Dendritic cell treated with granulocyte-macrophage colony-stimulating factor and Interleukin-4, amounts not matched to agents 40 ng/mL and 50 ng/mL, for 4 days (primary cell): ENCODE measurements at regions of chr20 and their contacts with region 1.

Region 1: GRCh38 chr20:5080384-5080877 is 39.3 kb downstream of the PCNA start:
- H3K4me3 Mint-ChIP-seq: peak overlapping the region; percentile 44
- H3K27ac Mint-ChIP-seq: peak overlapping the region; percentile 94
- H3K4me1 Mint-ChIP-seq: peaks cover 66% of the 10 kb centered on the region
- H3K27me3 Mint-ChIP-seq: no peaks in the 10 kb centered on the region

Region 2: GRCh38 chr20:4813863-4814695 is 266.4 kb before region 1 on chr20:
- intact Hi-C with region 1: loop called (anchors 10 kb)
- H3K4me3 Mint-ChIP-seq: peak overlapping the region; percentile 90
- H3K27ac Mint-ChIP-seq: peak overlapping the region; percentile 100
- H3K4me1 Mint-ChIP-seq: peaks cover 98% of the 10 kb centered on the region
- H3K27me3 Mint-ChIP-seq: no peaks in the 10 kb centered on the region

Region 3: GRCh38 chr20:5024982-5025381 is 55.4 kb before region 1 on chr20:
- intact Hi-C with region 1: no loop called
- H3K4me3 Mint-ChIP-seq: no peak overlapping the region
- H3K27ac Mint-ChIP-seq: no peak overlapping the region
- H3K4me1 Mint-ChIP-seq: peaks cover 24% of the 10 kb centered on the region
- H3K27me3 Mint-ChIP-seq: peaks cover under 1% of the 10 kb centered on the region

Region 4: GRCh38 chr20:5046656-5047339 is 33.6 kb before region 1 on chr20:
- intact Hi-C with region 1: loop called (anchors 5 kb)
- H3K4me3 Mint-ChIP-seq: peak overlapping the region; percentile 55
- H3K27ac Mint-ChIP-seq: peak overlapping the region; percentile 75
- H3K4me1 Mint-ChIP-seq: peaks cover 58% of the 10 kb centered on the region
- H3K27me3 Mint-ChIP-seq: peaks cover 18% of the 10 kb centered on the region

Region 5: DNA sequence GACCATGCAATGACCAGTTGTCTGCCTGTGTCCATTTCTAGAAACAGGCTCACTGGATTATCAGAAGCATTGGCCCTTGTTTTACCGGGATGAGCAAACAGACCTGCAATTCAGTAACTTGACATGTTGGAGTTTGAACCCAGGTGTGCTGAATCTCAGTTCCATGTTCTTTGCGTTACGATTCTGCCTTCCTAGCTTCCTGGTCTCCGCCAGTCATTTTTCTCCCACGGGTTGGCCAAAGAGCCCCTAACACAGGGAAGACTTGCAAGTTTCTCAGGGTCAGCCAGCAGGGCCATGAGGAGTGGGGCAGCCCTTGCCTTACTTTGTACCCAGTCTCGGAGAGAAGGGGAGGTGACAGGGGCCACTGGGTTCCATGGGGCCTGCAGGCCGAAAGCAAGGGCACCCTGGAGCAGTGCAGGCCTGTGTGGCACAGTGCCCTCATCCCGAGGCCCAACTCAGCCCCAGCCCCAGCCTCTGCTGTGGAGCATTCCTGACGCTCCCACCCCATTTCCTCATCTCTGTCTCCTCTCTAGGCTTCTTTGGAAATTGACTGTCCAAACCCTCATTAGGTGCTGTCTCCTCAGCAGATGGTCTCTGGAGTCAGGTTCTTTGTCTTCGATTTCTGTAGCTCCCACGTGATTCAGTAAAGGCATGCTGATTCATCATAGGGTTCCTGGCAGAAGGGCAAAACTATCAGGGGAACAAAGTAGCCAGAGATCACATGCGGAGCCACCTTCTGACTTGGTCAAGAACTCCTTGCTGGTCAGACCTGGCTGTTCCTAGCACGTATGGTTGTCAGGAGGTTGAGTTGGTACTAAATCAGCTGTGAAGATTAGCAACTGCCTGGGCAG is 70.0 kb after region 1 on chr20:
- intact Hi-C with region 1: no loop called
- H3K4me3 Mint-ChIP-seq: no peak overlapping the region
- H3K27ac Mint-ChIP-seq: peak overlapping the region; percentile 41
- H3K4me1 Mint-ChIP-seq: peaks cover 79% of the 10 kb centered on the region
- H3K27me3 Mint-ChIP-seq: no peaks in the 10 kb centered on the region